Mammary epithelial cell (primary cell): ENCODE measurements at regions of chr15 and their contacts with region 1.

Region 1: GRCh38 chr15:61871926-61872522 is 188.2 kb downstream of the VPS13C start:
- DNase-seq: no peak
- H3K4me3 ChIP-seq: no peak overlapping the region
- H3K27ac ChIP-seq: no peak overlapping the region
- H3K4me1 ChIP-seq: no peaks in the 10 kb centered on the region
- H3K27me3 ChIP-seq: no peaks in the 10 kb centered on the region
- CTCF ChIP-seq: peak; percentile 55 to 57

Region 2: GRCh38 chr15:61780278-61780980 is 91.6 kb before region 1 on chr15:
- CTCF ChIA-PET with region 1: no interaction called
- dilution Hi-C with region 1: no loop called
- in situ Hi-C with region 1: no loop called
- intact Hi-C with region 1: no loop called
- DNase-seq: peak; percentile 24
- H3K4me3 ChIP-seq: no peak overlapping the region
- H3K27ac ChIP-seq: no peak overlapping the region
- H3K4me1 ChIP-seq: peaks cover 4% of the 10 kb centered on the region
- H3K27me3 ChIP-seq: no peaks in the 10 kb centered on the region
- CTCF ChIP-seq: no peak

Region 3: GRCh38 chr15:62142731-62143130 is 270.7 kb after region 1 on chr15:
- CTCF ChIA-PET with region 1: no interaction called
- dilution Hi-C with region 1: no loop called
- in situ Hi-C with region 1: no loop called
- intact Hi-C with region 1: loop called (anchors 5 kb)
- DNase-seq: no peak
- H3K4me3 ChIP-seq: no peak overlapping the region
- H3K27ac ChIP-seq: no peak overlapping the region
- H3K4me1 ChIP-seq: no peaks in the 10 kb centered on the region
- H3K27me3 ChIP-seq: no peaks in the 10 kb centered on the region
- CTCF ChIP-seq: no peak